CD8-positive, alpha-beta memory T cell (primary cell): ENCODE measurements at regions of chr17 and their contacts with region 1.

Region 1: DNA sequence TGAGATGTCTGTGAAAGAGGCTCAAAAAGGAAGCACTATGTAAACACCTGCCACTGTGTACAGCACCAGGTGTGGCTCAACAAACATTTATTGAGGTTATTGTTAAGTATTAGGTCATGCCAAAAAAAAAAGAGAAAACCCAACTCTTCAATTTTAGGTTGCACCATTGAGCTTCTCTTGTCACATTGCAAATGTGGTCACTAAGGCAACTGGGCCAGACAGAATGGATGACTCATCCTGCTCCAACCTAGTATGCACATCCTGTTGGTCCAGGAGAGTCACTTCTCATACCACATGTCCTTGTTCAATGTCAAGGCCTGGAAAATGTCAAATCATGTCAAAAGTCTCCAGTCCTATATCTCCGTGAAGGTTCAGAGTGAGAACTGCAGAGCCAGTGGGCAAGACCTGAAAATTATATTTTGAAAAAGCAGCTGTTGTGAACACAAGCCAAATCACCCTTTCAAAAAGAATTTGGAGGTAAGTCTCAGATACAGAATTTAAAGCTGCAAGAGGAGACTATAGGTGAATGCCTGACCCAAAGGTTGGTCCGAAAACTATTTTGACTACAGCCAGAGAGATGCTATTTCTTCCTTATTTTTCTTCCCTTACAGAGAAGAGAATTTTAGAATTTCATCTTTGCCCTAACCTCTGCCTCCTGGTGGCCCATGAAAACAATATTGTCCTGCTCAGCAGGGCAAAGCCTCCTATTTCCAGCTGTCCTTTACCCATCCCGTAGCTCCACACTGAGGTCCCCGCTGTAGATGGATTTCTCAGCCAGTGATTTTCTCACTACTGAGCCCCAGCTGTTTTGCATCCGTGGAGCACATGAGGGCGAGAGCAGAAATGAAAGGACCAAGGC is 24.8 kb downstream of the HOXB1 start:
- DNase-seq: peak in 4 of 5 donors; percentile 10 to 85 (median 38)
- H3K4me3 ChIP-seq: no peak overlapping the region
- H3K4me3 Mint-ChIP-seq: peak overlapping the region in 1 of 7 donors; percentile 52
- H3K27ac ChIP-seq: no peak overlapping the region
- H3K27ac Mint-ChIP-seq: peak overlapping the region; percentile 38 to 92 (median 74)
- H3K4me1 ChIP-seq: no peaks in the 10 kb centered on the region
- H3K4me1 Mint-ChIP-seq: peaks cover 14 to 35% (median 24%) of the 10 kb centered on the region in 3 donors
- H3K27me3 ChIP-seq: no peaks in the 10 kb centered on the region
- H3K27me3 Mint-ChIP-seq: peaks cover 0 to 5% of the 10 kb centered on the region in 2 donors

Region 2: DNA sequence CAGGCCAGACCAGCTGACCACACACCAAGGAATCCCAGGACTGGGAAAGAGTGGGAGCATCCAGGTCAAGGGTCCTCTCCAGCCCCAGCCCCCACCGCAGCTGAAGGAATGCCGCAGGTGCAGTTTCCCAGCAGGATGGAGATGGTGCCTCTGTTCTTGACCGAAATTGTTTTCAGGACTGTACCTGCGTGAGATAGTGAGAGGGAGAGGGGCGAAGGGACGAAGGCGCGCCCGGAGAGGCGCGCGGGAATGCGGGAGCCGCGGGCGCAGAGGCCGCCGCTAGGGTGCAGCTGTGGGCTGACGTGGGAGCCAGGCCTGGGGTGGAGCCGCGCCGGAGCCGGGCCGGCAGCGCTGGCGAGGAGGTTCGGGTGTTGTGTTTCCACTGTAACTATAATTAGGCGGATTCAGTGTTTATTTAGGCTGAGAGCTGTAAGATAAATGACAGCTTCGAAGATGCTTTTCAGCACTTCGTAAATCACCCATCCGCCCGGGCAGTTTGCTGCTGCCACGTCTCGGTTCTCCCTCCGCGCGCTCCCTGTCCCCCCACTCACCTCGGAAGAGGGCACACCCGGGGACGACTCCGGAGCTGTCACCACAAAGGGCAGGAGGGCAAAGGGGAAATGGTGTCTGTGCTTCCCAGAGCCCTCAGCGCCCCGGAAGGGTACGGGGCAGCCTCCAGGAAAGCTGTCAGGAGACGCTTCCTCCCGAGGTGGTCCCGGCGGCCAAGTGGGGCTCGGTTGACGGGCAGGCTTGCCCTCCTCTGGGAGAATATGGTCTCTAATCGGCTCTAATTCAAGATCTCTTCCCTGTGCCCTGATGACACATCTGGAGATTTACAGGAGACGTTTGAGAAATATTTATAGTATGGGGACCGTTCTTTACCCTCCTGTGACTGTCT is 13.4 kb before region 1 on chr17:
- CTCF ChIA-PET with region 1: interaction called, 30 read pairs
- POLR2A ChIA-PET with region 1: interaction called, 3 read pairs
- DNase-seq: peak; percentile 43 to 78 (median 55)
- H3K4me3 ChIP-seq: peak overlapping the region; percentile 78
- H3K4me3 Mint-ChIP-seq: peak overlapping the region in 6 of 7 donors; percentile 41 to 81 (median 65)
- H3K27ac ChIP-seq: peak overlapping the region; percentile 57
- H3K27ac Mint-ChIP-seq: peak overlapping the region in 1 of 8 donors; percentile 78
- H3K4me1 ChIP-seq: peaks cover 11% of the 10 kb centered on the region
- H3K4me1 Mint-ChIP-seq: peaks cover 2 to 12% (median 4%) of the 10 kb centered on the region in 3 donors
- H3K27me3 ChIP-seq: peaks cover 8% of the 10 kb centered on the region
- H3K27me3 Mint-ChIP-seq: peaks cover 4 to 12% of the 10 kb centered on the region in 2 donors

Region 3: GRCh38 chr17:48547808-48548522 is 41.9 kb after region 1 on chr17:
- CTCF ChIA-PET with region 1: no interaction called
- POLR2A ChIA-PET with region 1: interaction called, 10 read pairs
- DNase-seq: peak in 1 of 5 donors; percentile 52
- H3K4me3 ChIP-seq: peak overlapping the region; percentile 29
- H3K4me3 Mint-ChIP-seq: peak overlapping the region in 6 of 7 donors; percentile 26 to 69 (median 50)
- H3K27ac ChIP-seq: peak overlapping the region; percentile 92
- H3K27ac Mint-ChIP-seq: peak overlapping the region in 7 of 8 donors; percentile 41 to 84 (median 58)
- H3K4me1 ChIP-seq: peaks cover 32% of the 10 kb centered on the region
- H3K4me1 Mint-ChIP-seq: peaks cover 15 to 46% (median 18%) of the 10 kb centered on the region in 3 donors
- H3K27me3 ChIP-seq: peaks cover under 1% of the 10 kb centered on the region
- H3K27me3 Mint-ChIP-seq: peaks cover 3 to 5% of the 10 kb centered on the region in 2 donors